HEK293 (cell line): ENCODE measurements at regions of chr11 and their contacts with region 1.

Region 1: GRCh38 chr11:72683782-72684200 is 9.6 kb upstream of the PDE2A start:
- H3K4me3 ChIP-seq: no peak overlapping the region
- H3K27ac ChIP-seq: no peak overlapping the region
- H3K4me1 ChIP-seq: no peaks in the 10 kb centered on the region
- CTCF ChIP-seq: peak; percentile 79

Region 2: GRCh38 chr11:72668611-72669347 is 15.0 kb before region 1 on chr11:
- CTCF ChIA-PET with region 1: interaction called, 18 read pairs
- POLR2A ChIA-PET with region 1: no interaction called
- H3K4me3 ChIP-seq: no peak overlapping the region
- H3K27ac ChIP-seq: no peak overlapping the region
- H3K4me1 ChIP-seq: no peaks in the 10 kb centered on the region
- CTCF ChIP-seq: no peak

Region 3: DNA sequence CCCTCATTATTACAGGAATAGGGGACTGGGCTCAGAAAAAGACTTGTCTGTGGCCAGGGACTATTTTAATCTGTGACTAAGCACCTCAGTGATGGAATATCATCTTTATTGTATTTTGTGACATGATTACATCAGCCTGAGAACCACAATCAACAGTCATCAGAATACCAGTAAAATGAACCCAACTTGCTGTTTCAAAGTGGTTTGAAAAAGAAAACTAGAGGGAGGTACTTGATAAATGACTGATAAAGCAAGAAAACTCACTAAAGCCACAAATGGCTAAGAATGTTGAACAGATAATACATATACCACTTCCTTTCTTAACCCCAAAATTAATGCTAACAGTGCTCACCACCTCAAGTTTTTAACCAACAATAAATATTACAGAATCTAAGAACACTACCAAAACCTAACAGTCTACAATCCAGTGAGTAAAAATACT is 286.1 kb after region 1 on chr11:
- CTCF ChIA-PET with region 1: no interaction called
- POLR2A ChIA-PET with region 1: no interaction called
- H3K4me3 ChIP-seq: no peak overlapping the region
- H3K27ac ChIP-seq: no peak overlapping the region
- H3K4me1 ChIP-seq: no peaks in the 10 kb centered on the region
- CTCF ChIP-seq: no peak